Gastrocnemius medialis (tissue), 4 donors: ENCODE measurements at regions of chr5 and their contacts with region 1.

Region 1: DNA sequence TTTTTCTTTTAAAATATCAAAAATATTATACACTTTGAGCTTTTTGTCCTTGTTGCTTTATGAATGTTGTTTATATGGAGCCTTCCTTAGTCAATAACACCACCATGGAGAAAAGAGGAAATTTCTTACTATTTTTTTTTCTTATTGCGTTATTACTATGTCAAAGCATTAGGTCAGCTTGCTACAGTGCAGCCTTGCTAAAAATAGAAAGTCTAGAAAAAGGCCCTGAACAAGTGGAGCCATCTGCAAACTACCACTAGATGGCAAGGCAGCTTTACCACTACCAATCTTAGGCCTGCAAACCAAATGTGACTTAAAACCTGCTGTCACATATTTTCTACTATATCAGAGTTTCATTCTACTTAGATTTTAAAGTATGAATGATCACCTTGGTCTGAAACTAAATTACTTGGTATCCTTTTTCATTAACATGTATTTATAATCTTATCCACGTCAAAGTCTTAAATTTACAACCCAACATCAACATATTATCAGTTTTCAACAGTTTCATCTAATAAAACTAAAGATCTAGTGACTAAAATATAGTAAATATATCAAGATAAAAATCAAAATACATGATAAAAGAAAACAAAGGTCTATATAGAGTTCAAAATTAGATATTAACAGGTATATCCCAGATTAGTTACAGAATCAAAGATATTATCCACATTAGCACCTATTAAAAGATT is 113.1 kb upstream of the ACOT12 start:
- DNase-seq: peak; percentile 55 to 72
- ATAC-seq: peak; percentile 100
- H3K4me3 ChIP-seq: no peak overlapping the region
- H3K27ac ChIP-seq: peak overlapping the region; percentile 33 to 50 (median 44)
- H3K4me1 ChIP-seq: peaks cover 4 to 11% of the 10 kb centered on the region in 2 donors
- H3K27me3 ChIP-seq: no peaks in the 10 kb centered on the region
- CTCF ChIP-seq: peak; percentile 69 to 94 (median 86)
- POLR2A ChIP-seq: no peak

Region 2: GRCh38 chr5:80711938-80712337 is 795.1 kb before region 1 on chr5:
- in situ Hi-C with region 1: no loop called
- intact Hi-C with region 1: no loop called
- DNase-seq: no peak
- ATAC-seq: no peak
- H3K4me3 ChIP-seq: no peak overlapping the region
- H3K27ac ChIP-seq: no peak overlapping the region
- H3K4me1 ChIP-seq: no peaks in the 10 kb centered on the region
- H3K27me3 ChIP-seq: no peaks in the 10 kb centered on the region
- CTCF ChIP-seq: no peak
- POLR2A ChIP-seq: no peak

Region 3: DNA sequence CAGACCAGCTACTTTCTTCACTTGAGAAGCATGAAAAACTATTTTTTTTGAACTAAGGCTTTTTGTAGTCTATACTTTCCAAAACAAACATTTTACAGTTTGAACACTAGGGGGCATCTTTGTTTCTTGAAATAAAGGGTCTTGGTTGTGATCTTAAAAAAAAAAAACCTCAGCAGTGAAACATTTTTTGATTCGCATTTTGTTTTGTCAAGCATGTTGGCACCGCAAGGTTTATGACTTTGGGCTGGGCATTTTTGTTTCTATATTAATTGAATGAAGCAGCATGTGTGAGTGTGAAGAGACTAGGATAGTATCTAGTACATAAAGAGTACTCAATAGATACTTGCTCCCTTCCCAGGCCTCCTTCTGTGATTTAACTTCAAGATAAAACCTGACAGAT is 81.5 kb before region 1 on chr5:
- in situ Hi-C with region 1: no loop called
- intact Hi-C with region 1: loop called (anchors 5 kb)
- DNase-seq: no peak
- ATAC-seq: peak; percentile 24 to 48
- H3K4me3 ChIP-seq: no peak overlapping the region
- H3K27ac ChIP-seq: peak overlapping the region; percentile 27 to 55 (median 44)
- H3K4me1 ChIP-seq: peaks cover 37 to 56% of the 10 kb centered on the region in 2 donors
- H3K27me3 ChIP-seq: no peaks in the 10 kb centered on the region
- CTCF ChIP-seq: peak; percentile 47 to 73 (median 62)
- POLR2A ChIP-seq: no peak

Region 4: GRCh38 chr5:81851481-81852178 is 344.6 kb after region 1 on chr5:
- in situ Hi-C with region 1: loop called in 2 of 4 experiments (anchors 10 kb)
- intact Hi-C with region 1: loop called (anchors 2 kb)
- DNase-seq: peak; percentile 89 to 97
- ATAC-seq: peak; percentile 83 to 87
- H3K4me3 ChIP-seq: peak overlapping the region; percentile 49 to 63 (median 55)
- H3K27ac ChIP-seq: peak overlapping the region; percentile 83 to 96 (median 92)
- H3K4me1 ChIP-seq: peaks cover 78 to 82% of the 10 kb centered on the region in 2 donors
- H3K27me3 ChIP-seq: no peaks in the 10 kb centered on the region
- CTCF ChIP-seq: peak in 1 of 5 experiments; percentile 15
- POLR2A ChIP-seq: peak in 1 of 2 donors; percentile 29

Region 5: DNA sequence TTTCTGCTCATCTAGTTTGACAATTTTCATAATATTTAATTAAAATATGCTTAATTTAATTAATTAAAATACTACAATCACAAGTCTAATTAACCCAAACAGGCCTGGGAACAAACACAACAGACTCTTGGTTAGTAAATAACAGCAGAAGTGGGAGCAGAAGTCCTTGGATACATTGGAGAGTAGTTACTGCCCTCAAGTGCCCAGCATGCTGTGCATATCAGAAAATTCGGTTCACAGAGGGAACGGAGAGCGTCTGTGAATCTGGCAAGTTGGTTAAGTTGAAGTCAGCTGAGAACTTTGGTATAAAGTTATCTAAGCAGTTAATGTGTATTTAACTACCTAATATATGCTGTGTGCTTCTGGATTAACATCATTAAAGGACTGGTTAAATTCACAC is 377.8 kb after region 1 on chr5:
- in situ Hi-C with region 1: no loop called
- intact Hi-C with region 1: loop called (anchors 10 kb)
- DNase-seq: no peak
- ATAC-seq: peak; percentile 66 to 73
- H3K4me3 ChIP-seq: no peak overlapping the region
- H3K27ac ChIP-seq: no peak overlapping the region
- H3K4me1 ChIP-seq: no peaks in the 10 kb centered on the region
- H3K27me3 ChIP-seq: no peaks in the 10 kb centered on the region
- CTCF ChIP-seq: peak in 2 of 5 experiments; percentile 25 to 43
- POLR2A ChIP-seq: no peak

Region 6: DNA sequence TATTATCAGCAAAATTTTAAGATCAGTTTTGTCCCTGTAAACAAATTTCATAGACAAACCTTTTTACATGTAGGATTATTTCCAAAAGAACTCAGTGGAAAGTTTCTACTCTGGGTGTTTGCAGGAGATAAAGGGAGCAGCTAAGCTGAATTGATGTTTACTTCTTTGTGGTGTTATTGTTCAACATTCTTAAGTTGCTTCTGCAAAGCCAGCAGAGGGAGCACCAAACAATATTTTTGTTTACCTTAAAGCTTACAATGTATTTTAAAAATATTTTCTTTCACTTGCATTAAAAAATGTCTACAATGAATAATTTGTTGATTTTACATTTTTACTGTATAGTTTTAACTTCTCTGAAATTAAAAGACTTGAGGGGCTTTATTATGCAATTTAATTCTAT is 600.2 kb after region 1 on chr5:
- in situ Hi-C with region 1: no loop called
- intact Hi-C with region 1: loop called (anchors 10 kb)
- DNase-seq: no peak
- ATAC-seq: peak; percentile 74 to 79
- H3K4me3 ChIP-seq: no peak overlapping the region
- H3K27ac ChIP-seq: no peak overlapping the region
- H3K4me1 ChIP-seq: peaks cover 7 to 18% of the 10 kb centered on the region in 2 donors
- H3K27me3 ChIP-seq: no peaks in the 10 kb centered on the region
- CTCF ChIP-seq: peak; percentile 38 to 56 (median 54)
- POLR2A ChIP-seq: no peak

Region 7: GRCh38 chr5:82174128-82174918 is 667.3 kb after region 1 on chr5:
- in situ Hi-C with region 1: loop called in 3 of 4 experiments (anchors 10 kb)
- intact Hi-C with region 1: no loop called
- DNase-seq: peak in 1 of 2 donors; percentile 25
- ATAC-seq: peak in 1 of 2 donors; percentile 66
- H3K4me3 ChIP-seq: no peak overlapping the region
- H3K27ac ChIP-seq: no peak overlapping the region
- H3K4me1 ChIP-seq: no peaks in the 10 kb centered on the region
- H3K27me3 ChIP-seq: no peaks in the 10 kb centered on the region
- CTCF ChIP-seq: peak; percentile 10 to 54 (median 32)
- POLR2A ChIP-seq: no peak